Activated T-helper 2 cell treated with anti-CD3 and anti-CD28 coated beads, Interferon-gamma antibody, Interleukin-2, Interleukin-4, amounts not matched to agents 10 μg/mL and 5 μg/mL and 100 μg/mL, durations not matched to agents 14 hours and 24 hours and 36 hours (primary cell): ENCODE measurements at regions of chr11 and their contacts with region 1.

Region 1: GRCh38 chr11:63536669-63537292 is at the start of gene PLAAT4:
- DNase-seq: peak; percentile 32
- H3K4me3 Mint-ChIP-seq: peak within 1 kb of the TSS; percentile 80
- H3K27ac Mint-ChIP-seq: peak within 1 kb of the TSS; percentile 74
- H3K4me1 Mint-ChIP-seq: peaks cover 62% of the 10 kb centered on the region
- H3K27me3 Mint-ChIP-seq: no peaks in the 10 kb centered on the region
- total RNA-seq, gene PLAAT4: 41.4 and 45.7 TPM in 2 replicates

Region 2: DNA sequence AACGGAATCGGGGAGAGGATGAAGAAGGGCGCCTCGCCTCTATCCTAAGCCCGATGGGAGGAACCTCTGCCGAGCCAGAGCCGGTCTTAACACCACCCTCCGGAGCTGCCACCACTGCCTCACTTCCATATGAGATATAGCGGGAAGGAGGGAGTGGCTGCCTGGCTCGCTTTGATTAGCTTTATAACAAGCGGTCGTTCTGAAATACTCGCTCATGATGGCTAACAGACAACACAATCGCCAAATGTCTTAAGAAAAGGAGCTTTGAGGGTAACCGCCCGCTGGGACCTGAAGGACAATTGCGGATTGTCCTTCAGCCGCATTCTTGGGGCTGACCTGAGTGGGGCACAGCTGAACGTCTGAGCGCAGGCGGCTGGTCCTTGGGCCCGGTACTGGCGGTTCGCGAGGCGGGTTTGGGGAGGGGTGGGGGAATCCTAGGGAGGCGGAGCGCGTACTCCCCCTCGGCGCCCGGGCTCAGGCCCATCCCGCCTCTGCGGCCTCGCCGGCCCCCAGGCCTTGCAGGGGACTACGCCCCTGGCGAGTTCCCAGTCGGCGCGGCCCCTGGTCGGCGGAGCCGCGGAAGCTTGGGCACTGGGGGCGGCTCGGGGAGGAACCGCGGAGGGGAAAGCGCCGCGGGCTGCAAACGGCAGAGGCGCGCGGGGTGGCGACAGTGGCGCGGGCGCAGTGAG is 46.1 kb before region 1 on chr11 and contains the start of gene PLAAT5:
- intact Hi-C with region 1: loop called (anchors 2 kb)
- DNase-seq: no peak
- H3K4me3 Mint-ChIP-seq: peak within 1 kb of the TSS; percentile 83
- H3K27ac Mint-ChIP-seq: peak within 1 kb of the TSS; percentile 78
- H3K4me1 Mint-ChIP-seq: peaks cover 28% of the 10 kb centered on the region
- H3K27me3 Mint-ChIP-seq: peaks cover 64% of the 10 kb centered on the region
- total RNA-seq, gene PLAAT5: 0.64 and 0.80 TPM in 2 replicates

Region 3: DNA sequence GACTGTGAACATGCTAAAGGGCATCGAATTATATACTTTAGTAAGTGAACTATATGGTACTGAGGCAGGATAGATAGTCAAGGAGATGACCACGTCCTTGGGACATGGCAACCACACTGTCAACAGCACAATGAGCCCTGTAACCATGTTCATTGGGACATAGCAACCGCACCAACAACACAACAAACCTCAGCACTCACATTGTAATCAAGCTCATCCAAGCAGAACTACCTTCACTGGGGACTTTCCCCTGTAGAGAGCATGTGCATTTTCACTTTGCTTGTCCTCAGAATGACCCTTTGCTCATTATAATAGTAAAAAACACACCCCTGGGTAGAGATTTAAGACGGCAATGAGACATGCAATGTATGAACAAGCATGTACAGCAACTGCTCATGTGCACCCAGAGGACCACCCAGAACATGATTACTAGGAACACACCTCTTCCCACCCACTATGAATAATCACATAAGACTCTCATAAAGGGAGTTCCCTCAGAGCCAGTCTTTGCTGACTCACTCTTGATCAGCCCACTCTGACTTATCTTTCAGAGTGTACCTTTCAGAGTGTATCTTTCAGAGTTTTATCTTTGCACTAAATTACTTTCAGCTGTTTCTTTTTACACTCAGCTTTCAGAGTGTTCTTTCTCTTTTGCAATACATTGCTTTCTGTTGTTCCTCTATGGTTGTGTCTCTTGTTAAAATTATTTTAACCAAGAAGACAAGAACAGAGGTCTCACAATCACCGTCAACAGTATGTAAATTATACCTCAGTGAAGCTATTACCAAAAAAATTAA is 30.5 kb after region 1 on chr11:
- intact Hi-C with region 1: loop called (anchors 1 kb)
- DNase-seq: peak; percentile 70
- H3K4me3 Mint-ChIP-seq: no peak overlapping the region
- H3K27ac Mint-ChIP-seq: peak overlapping the region; percentile 94
- H3K4me1 Mint-ChIP-seq: peaks cover 44% of the 10 kb centered on the region
- H3K27me3 Mint-ChIP-seq: peaks cover 21% of the 10 kb centered on the region

Region 4: DNA sequence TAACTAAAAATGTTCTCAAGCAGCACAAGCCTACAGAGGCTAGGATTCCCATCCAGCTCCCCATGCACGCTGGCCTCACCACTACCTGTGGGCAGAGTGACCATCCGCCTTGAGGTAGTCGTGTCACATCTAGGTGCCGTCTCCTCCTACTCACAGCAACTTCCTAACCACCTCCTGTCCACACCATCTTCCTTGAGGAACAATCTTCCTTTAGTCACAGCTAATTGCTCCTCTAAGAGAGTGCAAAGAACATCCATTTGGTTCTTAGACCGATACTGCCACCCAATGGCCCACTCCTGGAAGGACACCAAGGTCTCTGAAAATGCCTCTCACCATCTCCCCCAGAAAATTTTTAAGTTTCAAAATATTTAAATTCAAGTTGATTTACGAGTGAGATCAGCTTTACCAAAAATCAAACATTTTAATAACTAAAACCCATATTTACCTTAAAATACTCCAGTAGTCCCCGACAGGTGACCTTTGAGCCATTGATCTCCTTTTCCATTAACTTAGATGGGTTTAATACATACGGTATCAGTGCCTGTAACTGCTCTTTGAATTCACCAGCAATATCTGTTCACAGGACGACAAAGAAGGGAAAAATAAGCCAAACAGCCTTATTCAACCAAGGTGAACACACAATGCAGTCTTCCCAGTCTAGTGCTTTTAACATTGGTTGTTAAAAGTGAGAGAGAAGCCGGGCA is 99.1 kb after region 1 on chr11:
- intact Hi-C with region 1: loop called (anchors 10 kb)
- DNase-seq: peak; percentile 50
- H3K4me3 Mint-ChIP-seq: no peak overlapping the region
- H3K27ac Mint-ChIP-seq: no peak overlapping the region
- H3K4me1 Mint-ChIP-seq: peaks cover 11% of the 10 kb centered on the region
- H3K27me3 Mint-ChIP-seq: no peaks in the 10 kb centered on the region